ENCODE measurements at regions of chr12 and their contacts with region 1.

Region 1: DNA sequence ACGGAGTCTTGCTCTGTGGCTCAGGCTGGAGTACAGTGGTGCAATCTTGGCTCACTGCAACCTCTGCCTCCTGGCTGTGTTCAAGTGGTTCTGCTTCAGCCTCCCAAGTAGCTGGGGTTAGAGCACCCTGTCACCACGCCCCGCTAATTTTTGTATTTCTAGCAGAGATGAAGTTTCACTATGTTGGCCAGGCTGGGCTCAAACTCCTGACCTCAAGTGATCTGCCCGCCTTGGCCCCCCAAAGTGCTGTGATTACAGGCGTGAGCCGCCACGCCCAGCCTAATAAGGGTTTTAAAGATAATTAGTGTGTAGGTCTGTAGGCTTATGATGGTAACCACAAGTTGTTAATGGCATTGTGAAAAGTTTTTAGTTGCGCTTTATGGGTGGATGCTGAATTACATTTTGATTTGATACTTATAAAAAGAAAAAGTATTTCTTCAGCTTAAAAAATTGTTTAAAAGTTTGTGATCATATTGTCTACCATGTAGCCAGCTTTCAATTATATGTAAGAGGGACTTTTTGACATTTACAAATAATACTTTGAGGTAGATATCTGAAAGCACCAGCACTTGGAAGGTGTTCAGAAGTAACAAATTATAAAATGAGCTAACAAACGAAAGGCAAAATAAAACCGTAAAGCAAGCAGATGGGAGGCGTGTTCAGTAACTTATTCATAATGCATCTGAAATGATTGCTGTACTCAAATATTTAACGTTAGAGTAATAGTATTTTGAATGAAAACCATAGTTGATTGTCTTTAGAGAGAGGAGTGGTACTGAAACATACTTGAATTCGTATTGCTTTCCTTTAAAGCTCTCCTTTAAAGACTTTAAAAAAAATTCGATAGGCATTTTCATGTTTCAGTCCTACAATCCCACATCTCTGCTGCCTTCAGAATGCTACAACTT is 37.1 kb downstream of the MDM2 start:
- DNase-seq: no peak
- ATAC-seq: no peak
- H3K4me3 Mint-ChIP-seq: no peak overlapping the region
- H3K27ac Mint-ChIP-seq: peak overlapping the region in 6 of 10 donors; percentile 9 to 75 (median 36)
- H3K4me1 Mint-ChIP-seq: peaks cover 0 to 6% (median 4%) of the 10 kb centered on the region in 4 donors
- H3K27me3 Mint-ChIP-seq: no peaks in the 10 kb centered on the region

Region 2: DNA sequence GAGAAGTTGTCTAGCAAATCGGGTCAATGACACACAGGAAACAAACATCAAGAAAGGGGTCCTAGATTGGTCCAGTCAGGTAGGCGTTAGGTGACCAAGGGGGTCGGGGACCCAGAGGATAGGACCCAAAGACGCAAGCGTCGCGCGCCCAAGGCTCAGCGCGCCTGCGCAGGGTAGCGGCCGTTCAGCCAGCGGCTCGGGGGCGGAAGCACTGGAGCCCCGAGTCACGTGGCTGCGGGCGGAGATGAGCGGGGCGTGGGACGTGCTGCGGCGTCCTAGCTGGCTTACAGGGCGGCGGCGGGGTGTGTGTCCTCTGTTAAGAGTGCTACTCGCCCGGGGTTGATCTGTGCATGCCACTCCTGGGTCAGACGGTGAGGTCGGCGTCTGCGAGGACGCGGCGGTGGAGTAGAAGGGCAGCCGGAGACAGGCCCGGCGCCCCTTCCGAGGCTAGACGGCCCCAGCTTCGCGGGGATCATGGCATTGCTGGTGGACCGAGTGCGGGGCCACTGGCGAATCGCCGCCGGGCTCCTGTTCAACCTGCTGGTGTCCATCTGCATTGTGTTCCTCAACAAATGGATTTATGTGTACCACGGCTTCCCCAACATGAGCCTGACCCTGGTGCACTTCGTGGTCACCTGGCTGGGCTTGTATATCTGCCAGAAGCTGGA is 99.0 kb before region 1 on chr12 and contains the start of gene SLC35E3:
- POLR2A ChIA-PET with region 1: no interaction called
- DNase-seq: peak; percentile 83 to 94 (median 88)
- ATAC-seq: peak; percentile 98 to 99
- H3K4me3 Mint-ChIP-seq: peak within 1 kb of the TSS; percentile 95 to 98 (median 98)
- H3K27ac Mint-ChIP-seq: peak within 1 kb of the TSS; percentile 68 to 98 (median 96)
- H3K4me1 Mint-ChIP-seq: peaks cover 25 to 56% (median 47%) of the 10 kb centered on the region in 4 donors
- H3K27me3 Mint-ChIP-seq: no peaks in the 10 kb centered on the region
- polyA plus RNA-seq, gene SLC35E3: 10.9 to 12.0 (median 12.0) TPM

Region 3: DNA sequence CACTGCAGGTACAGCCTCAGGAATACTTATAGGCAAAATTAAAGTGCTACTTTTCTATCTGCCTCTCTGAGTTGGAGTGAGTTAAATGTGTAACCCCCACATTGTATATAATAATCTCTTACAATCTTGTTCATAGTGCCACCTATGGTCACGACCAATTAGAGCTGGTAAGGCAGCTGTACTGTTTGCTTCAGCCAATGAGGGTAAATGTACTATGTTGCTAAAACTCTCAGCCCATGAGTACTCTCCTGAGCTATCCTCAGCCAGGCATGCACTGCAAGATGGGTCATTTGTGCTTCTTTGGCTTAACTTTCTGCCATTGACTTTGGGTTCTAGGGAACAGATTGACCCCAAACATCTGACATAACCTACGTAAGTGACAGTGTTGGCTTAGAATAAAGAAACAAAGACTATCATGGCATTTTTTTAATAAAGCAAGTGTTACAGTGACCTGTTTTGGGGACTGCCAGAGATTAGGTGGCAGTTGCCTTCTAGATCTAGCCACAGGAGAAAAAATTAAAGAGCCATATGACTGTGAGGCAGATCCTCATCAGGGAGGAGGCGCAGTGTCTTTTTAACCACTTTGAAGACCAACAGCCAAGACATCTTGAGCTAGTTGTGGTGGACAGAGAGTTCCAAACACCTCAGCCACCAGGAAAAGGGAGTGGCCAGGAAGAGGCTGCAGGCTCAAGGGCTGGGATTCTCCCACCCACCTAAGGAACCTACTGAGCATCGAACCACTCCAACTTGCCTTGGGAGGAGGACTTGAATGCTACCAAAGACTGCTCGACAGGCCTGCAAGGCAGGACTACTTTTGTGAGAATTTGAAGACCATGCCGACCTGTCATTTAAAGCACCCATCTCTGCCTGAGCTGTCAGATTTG is 51.8 kb before region 1 on chr12:
- POLR2A ChIA-PET with region 1: no interaction called
- DNase-seq: peak in 6 of 10 donors; percentile 11 to 54 (median 29)
- ATAC-seq: peak; percentile 79 to 80
- H3K4me3 Mint-ChIP-seq: no peak overlapping the region
- H3K27ac Mint-ChIP-seq: no peak overlapping the region
- H3K4me1 Mint-ChIP-seq: peaks cover 0 to 4% (median 2%) of the 10 kb centered on the region in 4 donors
- H3K27me3 Mint-ChIP-seq: no peaks in the 10 kb centered on the region

Region 4: GRCh38 chr12:68821357-68822188 is 23.5 kb before region 1 on chr12:
- POLR2A ChIA-PET with region 1: interaction called, 11 read pairs
- DNase-seq: no peak
- ATAC-seq: no peak
- H3K4me3 Mint-ChIP-seq: no peak overlapping the region
- H3K27ac Mint-ChIP-seq: peak overlapping the region in 9 of 10 donors; percentile 43 to 87 (median 77)
- H3K4me1 Mint-ChIP-seq: peaks cover 0 to 29% (median 10%) of the 10 kb centered on the region in 4 donors
- H3K27me3 Mint-ChIP-seq: no peaks in the 10 kb centered on the region

Region 5: DNA sequence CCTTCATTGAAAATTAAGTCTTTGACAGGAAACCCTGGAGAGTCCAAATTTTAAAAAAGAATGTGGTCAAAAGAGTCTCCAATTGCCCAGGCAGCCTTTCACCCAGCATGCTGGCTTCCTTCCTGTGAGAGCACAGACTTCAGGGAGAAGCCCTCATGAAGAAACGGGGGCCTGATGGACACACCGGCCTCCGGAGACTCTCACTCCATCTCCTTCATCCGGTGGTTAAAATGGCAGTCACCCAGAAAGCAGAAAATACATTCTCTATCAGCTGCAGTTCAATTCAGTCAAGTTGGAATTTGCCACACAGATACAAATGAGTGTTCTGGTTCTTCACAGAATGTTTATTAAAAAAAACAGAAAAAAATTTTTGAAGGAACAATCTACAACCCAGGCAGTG is 31.4 kb after region 1 on chr12:
- POLR2A ChIA-PET with region 1: no interaction called
- DNase-seq: no peak
- ATAC-seq: no peak
- H3K4me3 Mint-ChIP-seq: no peak overlapping the region
- H3K27ac Mint-ChIP-seq: peak overlapping the region in 1 of 10 donors; percentile 0
- H3K4me1 Mint-ChIP-seq: no peaks in the 10 kb centered on the region
- H3K27me3 Mint-ChIP-seq: peaks cover 0 to 4% (median 0%) of the 10 kb centered on the region in 5 donors